GM12878 (cell line): ENCODE measurements at regions of chr12 and their contacts with region 1.

Region 1: DNA sequence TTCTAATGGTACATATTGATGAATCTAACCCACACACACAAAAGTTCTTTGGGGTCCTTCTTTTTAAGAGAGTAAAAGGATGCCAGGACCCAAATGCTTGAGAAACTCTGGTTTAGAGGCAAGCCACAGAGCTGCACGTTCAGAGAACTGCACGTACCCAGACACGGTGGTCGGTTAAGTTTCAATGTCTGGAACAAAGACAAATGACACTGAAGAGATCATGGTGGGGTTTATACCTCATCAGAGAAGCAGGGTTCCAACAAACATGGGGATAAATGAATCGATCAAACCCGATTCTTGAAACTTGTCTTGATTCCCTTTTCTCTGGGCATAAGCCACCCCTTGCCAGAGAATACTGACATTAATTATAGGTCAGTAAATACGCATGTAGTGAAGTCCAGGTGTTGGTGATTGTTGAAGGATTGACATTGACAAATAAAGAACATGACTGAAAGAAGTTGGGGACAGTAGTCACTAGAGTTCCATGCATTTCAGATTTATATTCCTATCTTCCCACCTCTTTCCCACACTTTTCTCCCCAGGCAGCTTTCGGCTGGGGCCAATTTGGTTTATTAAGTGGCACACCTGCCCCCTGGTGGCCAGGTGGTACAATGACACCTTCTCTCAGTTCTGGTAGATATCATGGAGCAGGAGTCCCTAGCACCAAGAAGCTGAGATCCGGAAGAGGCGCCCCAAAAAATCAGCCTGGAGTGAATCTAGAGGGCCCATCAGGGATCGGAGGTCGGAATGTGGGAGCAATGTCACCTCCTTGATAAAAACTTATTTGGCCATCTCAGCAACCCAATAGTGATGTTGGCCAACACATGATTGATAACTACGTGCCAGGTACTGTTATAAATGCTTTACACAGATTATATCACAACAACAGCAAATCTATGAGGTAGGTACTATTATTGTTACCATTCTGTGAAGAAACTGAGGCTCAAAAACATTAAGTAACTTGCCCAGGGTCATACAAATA is 17.8 kb upstream of the HDAC7 start:
- DNase-seq: peak; percentile 20
- ATAC-seq: peak; percentile 78
- H3K4me3 ChIP-seq: no peak overlapping the region
- H3K27ac ChIP-seq: no peak overlapping the region
- H3K4me1 ChIP-seq: peaks cover 46% of the 10 kb centered on the region
- H3K27me3 ChIP-seq: no peaks in the 10 kb centered on the region; a peak in 2 of 4 replicates
- CTCF ChIP-seq: peak; percentile 81 to 85 (median 83)
- EP300 ChIP-seq: no peak
- POLR2A ChIP-seq: no peak
- RAD21 ChIP-seq: peak; percentile 93

Region 2: DNA sequence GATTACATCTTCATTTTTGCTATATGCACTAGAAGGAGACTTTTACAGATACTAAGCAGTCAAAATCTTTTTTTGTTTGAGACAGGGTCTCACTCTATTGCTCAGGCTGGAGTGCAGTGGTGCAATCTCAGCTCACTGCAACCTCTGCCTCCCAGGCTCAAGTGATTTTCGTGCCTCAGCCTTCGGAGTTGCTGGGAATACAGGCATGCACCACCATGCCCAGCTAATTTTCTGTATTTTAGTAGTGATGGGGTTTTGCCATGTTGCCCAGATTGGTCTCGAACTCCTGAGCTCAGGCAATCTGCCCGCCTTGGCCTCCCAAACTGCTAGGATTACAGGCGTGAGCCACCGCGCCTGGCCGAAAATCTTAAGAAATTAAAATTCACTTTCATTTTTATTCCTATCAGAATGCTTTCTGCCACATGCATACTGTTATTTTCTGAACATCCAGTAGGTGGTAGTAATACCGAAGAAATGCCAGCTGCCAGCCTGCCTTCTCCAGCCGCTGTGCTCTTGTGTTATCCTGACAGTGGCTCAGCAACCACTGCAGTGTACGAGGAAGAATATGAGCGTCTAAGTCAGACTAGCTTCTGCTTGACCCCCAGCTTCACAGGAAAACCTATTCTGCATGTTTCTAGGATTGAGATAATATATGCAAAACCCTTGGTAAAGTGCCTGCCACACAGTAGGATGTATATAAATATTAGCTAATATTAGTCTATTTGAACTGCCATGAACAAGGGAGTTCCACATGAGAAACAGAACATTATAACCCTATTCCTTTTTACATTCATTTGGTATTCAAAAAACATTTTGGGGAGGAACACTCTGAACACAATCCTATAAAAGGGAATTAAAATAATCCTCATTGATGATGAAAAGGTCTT is 185.9 kb before region 1 on chr12:
- CTCF ChIA-PET with region 1: interaction called, 20 read pairs
- POLR2A ChIA-PET with region 1: no interaction called
- RAD21 ChIA-PET with region 1: interaction called, 4 read pairs
- SMC1A ChIA-PET with region 1: interaction called, 4 read pairs
- in situ Hi-C with region 1: no loop called
- intact Hi-C with region 1: loop called (anchors 5 kb)
- DNase-seq: peak; percentile 23
- ATAC-seq: peak; percentile 96
- H3K4me3 ChIP-seq: no peak overlapping the region
- H3K27ac ChIP-seq: no peak overlapping the region
- H3K4me1 ChIP-seq: peaks cover 13% of the 10 kb centered on the region
- H3K27me3 ChIP-seq: no peaks in the 10 kb centered on the region
- CTCF ChIP-seq: peak; percentile 57 to 72 (median 67)
- EP300 ChIP-seq: no peak
- POLR2A ChIP-seq: no peak
- RAD21 ChIP-seq: peak; percentile 67

Region 3: GRCh38 chr12:47672068-47672467 is 165.4 kb before region 1 on chr12:
- CTCF ChIA-PET with region 1: no interaction called
- POLR2A ChIA-PET with region 1: no interaction called
- RAD21 ChIA-PET with region 1: no interaction called
- SMC1A ChIA-PET with region 1: no interaction called
- in situ Hi-C with region 1: no loop called
- intact Hi-C with region 1: no loop called
- DNase-seq: no peak
- ATAC-seq: no peak
- H3K4me3 ChIP-seq: no peak overlapping the region
- H3K27ac ChIP-seq: no peak overlapping the region
- H3K4me1 ChIP-seq: no peaks in the 10 kb centered on the region
- H3K27me3 ChIP-seq: no peaks in the 10 kb centered on the region
- CTCF ChIP-seq: no peak
- EP300 ChIP-seq: no peak
- POLR2A ChIP-seq: no peak
- RAD21 ChIP-seq: no peak

Region 4: GRCh38 chr12:47742253-47742825 is 95.1 kb before region 1 on chr12:
- CTCF ChIA-PET with region 1: interaction called, 207 read pairs
- POLR2A ChIA-PET with region 1: no interaction called
- RAD21 ChIA-PET with region 1: interaction called, 101 read pairs
- SMC1A ChIA-PET with region 1: interaction called, 71 read pairs
- in situ Hi-C with region 1: no loop called
- intact Hi-C with region 1: loop called (anchors 1 kb)
- DNase-seq: no peak
- ATAC-seq: peak; percentile 57
- H3K4me3 ChIP-seq: no peak overlapping the region
- H3K27ac ChIP-seq: no peak overlapping the region
- H3K4me1 ChIP-seq: peaks cover 28% of the 10 kb centered on the region
- H3K27me3 ChIP-seq: no peaks in the 10 kb centered on the region
- CTCF ChIP-seq: peak; percentile 97 to 99 (median 99)
- EP300 ChIP-seq: no peak
- POLR2A ChIP-seq: no peak
- RAD21 ChIP-seq: peak; percentile 91

Region 5: DNA sequence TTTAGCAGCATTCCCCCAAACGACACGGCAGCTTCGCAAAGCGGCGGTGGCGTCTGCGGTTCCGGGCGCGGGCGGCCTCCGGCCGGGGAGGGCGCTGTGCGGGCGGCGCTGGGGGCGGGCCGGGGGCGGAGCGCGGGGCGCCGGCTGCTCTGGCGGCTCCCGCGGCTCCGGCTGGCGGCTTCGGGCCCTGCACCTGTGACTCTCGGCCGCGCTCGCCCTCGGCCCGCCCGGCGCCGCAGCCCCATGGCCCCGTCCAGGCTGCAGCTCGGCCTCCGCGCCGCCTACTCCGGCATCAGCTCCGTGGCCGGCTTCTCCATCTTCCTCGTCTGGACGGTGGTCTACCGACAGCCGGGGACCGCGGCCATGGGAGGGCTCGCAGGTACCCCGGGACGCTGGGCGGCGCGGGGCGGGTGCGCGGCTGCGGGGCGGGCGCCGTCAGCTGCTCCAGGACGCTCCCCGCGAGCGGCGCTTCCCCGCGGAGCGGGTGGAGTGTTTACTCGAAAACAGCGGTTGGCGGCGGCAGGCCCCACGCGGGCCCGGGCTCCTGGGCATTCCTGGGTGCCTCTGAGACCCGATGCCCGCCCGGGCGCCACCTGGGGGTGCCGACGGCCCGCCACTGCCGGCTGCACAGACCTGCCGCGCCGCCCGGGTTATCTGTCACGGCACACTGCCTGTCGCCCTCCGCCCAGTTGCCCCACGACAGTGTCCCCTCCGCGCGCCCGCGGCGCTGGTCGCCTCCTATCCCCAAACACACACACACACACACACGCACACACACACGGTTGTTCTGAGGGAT is 64.2 kb before region 1 on chr12 and contains the start of gene SLC48A1:
- CTCF ChIA-PET with region 1: interaction called, 167 read pairs
- POLR2A ChIA-PET with region 1: interaction called, 4 read pairs
- RAD21 ChIA-PET with region 1: interaction called, 68 read pairs
- SMC1A ChIA-PET with region 1: interaction called, 31 read pairs
- in situ Hi-C with region 1: no loop called
- intact Hi-C with region 1: loop called (anchors 5 kb)
- DNase-seq: no peak
- ATAC-seq: peak; percentile 93
- H3K4me3 ChIP-seq: peak within 1 kb of the TSS; percentile 80
- H3K27ac ChIP-seq: no peak within 1 kb of the TSS
- H3K4me1 ChIP-seq: peaks cover 17% of the 10 kb centered on the region; the same call in 1 of the 2 replicates
- H3K27me3 ChIP-seq: no peaks in the 10 kb centered on the region
- CTCF ChIP-seq: peak; percentile 16 to 47 (median 24); a peak in 4 of 6 replicates
- EP300 ChIP-seq: no peak
- POLR2A ChIP-seq: peak; percentile 62
- RAD21 ChIP-seq: no peak
- polyA plus RNA-seq, gene SLC48A1: 1.1 to 2.2 TPM

Region 6: GRCh38 chr12:47812797-47813510 is 24.5 kb before region 1 on chr12:
- CTCF ChIA-PET with region 1: interaction called, 108 read pairs
- POLR2A ChIA-PET with region 1: interaction called, 46 read pairs
- RAD21 ChIA-PET with region 1: interaction called, 202 read pairs
- SMC1A ChIA-PET with region 1: interaction called, 24 read pairs
- in situ Hi-C with region 1: no loop called
- intact Hi-C with region 1: no loop called
- DNase-seq: peak; percentile 73
- ATAC-seq: peak; percentile 83
- H3K4me3 ChIP-seq: peak overlapping the region; percentile 75
- H3K27ac ChIP-seq: peak overlapping the region; percentile 85
- H3K4me1 ChIP-seq: peaks cover 80% of the 10 kb centered on the region
- H3K27me3 ChIP-seq: no peaks in the 10 kb centered on the region; a peak in 2 of 4 replicates
- CTCF ChIP-seq: peak in 1 of 3 experiments; percentile 25; a peak in 2 of 6 replicates
- EP300 ChIP-seq: peak; percentile 16 to 31; a peak in 1 of 4 replicates
- POLR2A ChIP-seq: peak; percentile 88
- RAD21 ChIP-seq: peak; percentile 35; the same call in 1 of the 2 replicates

Region 7: DNA sequence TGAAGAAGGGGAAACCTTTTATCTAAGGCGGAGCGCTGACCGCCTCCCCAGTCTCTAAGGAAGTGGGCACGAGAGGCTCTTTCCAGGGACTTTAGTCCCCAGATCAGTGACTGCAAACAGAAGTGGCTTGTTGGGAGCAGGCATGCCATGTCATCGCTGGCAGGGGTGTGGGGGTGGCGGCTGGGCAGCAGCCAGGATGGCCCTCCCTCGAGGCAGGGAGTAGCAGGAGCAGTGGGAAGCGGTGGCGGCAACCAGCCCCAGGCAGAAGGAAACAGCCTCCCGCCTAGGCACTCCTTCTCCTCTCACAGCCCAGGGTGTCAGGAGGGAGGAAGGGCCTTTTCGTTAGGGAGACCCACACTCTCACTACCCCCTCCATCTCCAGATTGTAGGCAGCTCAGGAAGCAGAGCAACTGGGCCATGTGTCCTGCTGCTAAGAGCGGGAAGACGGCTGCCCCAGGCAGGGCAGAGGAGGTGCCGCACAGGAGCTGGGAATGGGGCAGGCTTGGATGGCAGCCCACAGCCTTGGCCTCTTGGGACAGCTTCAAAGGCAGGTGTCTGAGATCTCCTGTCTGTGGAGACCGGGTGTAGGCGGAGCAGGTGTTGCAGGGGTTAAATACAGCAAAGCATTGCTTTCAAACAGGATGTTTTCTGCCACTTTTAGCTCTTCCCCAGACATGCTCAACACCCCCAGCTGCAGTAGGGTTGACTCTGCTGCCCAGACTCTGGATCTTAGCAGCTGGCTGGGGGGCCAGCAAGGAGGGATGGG is 45.5 kb after region 1 on chr12:
- CTCF ChIA-PET with region 1: interaction called, 42 read pairs
- POLR2A ChIA-PET with region 1: interaction called, 8 read pairs
- RAD21 ChIA-PET with region 1: interaction called, 25 read pairs
- SMC1A ChIA-PET with region 1: interaction called, 21 read pairs
- in situ Hi-C with region 1: no loop called
- intact Hi-C with region 1: no loop called
- DNase-seq: peak; percentile 77
- ATAC-seq: peak; percentile 73
- H3K4me3 ChIP-seq: peak overlapping the region; percentile 48; the same call in 1 of the 2 replicates
- H3K27ac ChIP-seq: peak overlapping the region; percentile 67
- H3K4me1 ChIP-seq: peaks cover 53% of the 10 kb centered on the region
- H3K27me3 ChIP-seq: no peaks in the 10 kb centered on the region
- CTCF ChIP-seq: no peak
- EP300 ChIP-seq: peak; percentile 89 to 92
- POLR2A ChIP-seq: peak; percentile 43; the same call in 1 of the 2 replicates
- RAD21 ChIP-seq: no peak